PC-3 (cell line): ENCODE measurements at regions of chr2 and their contacts with region 1.

Region 1: GRCh38 chr2:44291281-44292248 is 16.3 kb downstream of the SLC3A1 start:
- DNase-seq: peak; percentile 93
- ATAC-seq: peak; percentile 81
- H3K4me3 ChIP-seq: peak overlapping the region; percentile 28; the same call in 1 of the 2 replicates
- H3K27ac ChIP-seq: peak overlapping the region; percentile 80
- H3K4me1 ChIP-seq: peaks cover 40% of the 10 kb centered on the region
- H3K27me3 ChIP-seq: no peaks in the 10 kb centered on the region
- CTCF ChIP-seq: peak; percentile 85

Region 2: GRCh38 chr2:44044281-44044720 is 247.3 kb before region 1 on chr2:
- CTCF ChIA-PET with region 1: no interaction called
- POLR2A ChIA-PET with region 1: no interaction called
- intact Hi-C with region 1: loop called (anchors 1 kb)
- DNase-seq: peak; percentile 66
- ATAC-seq: peak; percentile 95
- H3K4me3 ChIP-seq: no peak overlapping the region
- H3K27ac ChIP-seq: no peak overlapping the region
- H3K4me1 ChIP-seq: no peaks in the 10 kb centered on the region
- H3K27me3 ChIP-seq: 0 out of 2 replicates have a peak, but pooled peaks cover 5% of the 10 kb centered on the region
- CTCF ChIP-seq: peak; percentile 52

Region 3: DNA sequence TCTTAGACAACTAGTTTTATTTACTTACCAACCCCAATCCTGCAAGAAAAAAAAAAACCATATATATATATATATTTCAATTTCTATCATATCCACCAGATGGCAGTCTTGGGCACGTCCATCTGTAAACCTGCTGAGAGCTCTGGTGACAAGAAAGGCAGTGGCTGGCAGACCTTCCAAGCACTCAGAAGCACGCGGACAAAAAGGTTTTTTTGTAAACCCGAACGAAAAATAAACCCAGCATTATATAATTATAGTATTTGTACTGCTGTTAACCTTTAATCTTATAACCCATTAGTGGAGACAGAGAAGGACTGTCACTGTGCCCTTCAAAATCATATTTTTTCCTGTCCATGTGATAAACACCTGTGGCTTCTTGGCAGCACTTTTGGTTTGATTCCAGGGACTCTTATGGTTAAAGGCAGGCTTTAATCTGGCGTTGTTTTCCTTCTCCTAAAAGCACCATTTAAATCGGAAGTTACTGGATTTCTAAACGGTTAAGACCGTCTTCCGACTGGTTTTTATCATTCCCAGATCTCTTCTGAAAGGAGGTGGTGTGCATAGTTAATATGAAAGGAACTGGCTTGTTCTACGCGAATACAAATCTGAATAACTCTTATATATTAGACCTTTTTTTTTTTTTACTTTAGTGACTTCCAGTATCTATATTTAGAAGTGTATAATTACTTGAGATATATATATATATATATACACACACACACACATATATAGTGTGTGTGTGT is 47.3 kb before region 1 on chr2:
- CTCF ChIA-PET with region 1: interaction called, 10 read pairs
- POLR2A ChIA-PET with region 1: no interaction called
- intact Hi-C with region 1: loop called (anchors 1 kb)
- DNase-seq: peak; percentile 79
- ATAC-seq: peak; percentile 49
- H3K4me3 ChIP-seq: peak overlapping the region; percentile 78
- H3K27ac ChIP-seq: peak overlapping the region; percentile 8; the same call in 1 of the 2 replicates
- H3K4me1 ChIP-seq: peaks cover 21% of the 10 kb centered on the region
- H3K27me3 ChIP-seq: no peaks in the 10 kb centered on the region
- CTCF ChIP-seq: peak; percentile 50

Region 4: DNA sequence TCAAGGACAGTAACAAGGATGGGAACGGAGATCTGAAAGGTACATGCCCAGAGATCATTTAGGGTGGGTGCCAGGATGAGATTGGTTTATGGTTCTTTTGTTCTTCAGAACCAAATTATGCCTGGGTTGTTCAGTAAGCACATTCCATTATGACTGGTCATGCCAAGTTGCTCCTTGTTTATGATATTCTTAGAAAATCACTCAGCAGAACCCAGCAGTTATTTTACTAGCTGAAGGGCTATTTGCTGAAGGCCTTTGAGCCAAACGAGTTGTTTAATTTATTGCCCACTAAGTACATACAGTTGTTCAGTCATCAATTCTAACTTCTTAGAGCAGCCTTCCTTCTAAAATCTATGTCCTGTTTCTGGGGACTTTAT is 15.7 kb before region 1 on chr2:
- CTCF ChIA-PET with region 1: no interaction called
- POLR2A ChIA-PET with region 1: no interaction called
- intact Hi-C with region 1: loop called (anchors 1 kb)
- DNase-seq: peak; percentile 90
- ATAC-seq: peak; percentile 93
- H3K4me3 ChIP-seq: no peak overlapping the region
- H3K27ac ChIP-seq: peak overlapping the region; percentile 43
- H3K4me1 ChIP-seq: peaks cover 24% of the 10 kb centered on the region
- H3K27me3 ChIP-seq: no peaks in the 10 kb centered on the region
- CTCF ChIP-seq: no peak